ENCODE measurements at regions of chr1 and their contacts with region 1.

Region 1: GRCh38 chr1:63691701-63692425 is 82.0 kb upstream of the ROR1 start:
- DNase-seq: peak; percentile 65
- H3K4me3 Mint-ChIP-seq: no peak overlapping the region
- H3K27ac Mint-ChIP-seq: no peak overlapping the region
- H3K4me1 Mint-ChIP-seq: peaks cover 5% of the 10 kb centered on the region
- H3K27me3 Mint-ChIP-seq: no peaks in the 10 kb centered on the region

Region 2: DNA sequence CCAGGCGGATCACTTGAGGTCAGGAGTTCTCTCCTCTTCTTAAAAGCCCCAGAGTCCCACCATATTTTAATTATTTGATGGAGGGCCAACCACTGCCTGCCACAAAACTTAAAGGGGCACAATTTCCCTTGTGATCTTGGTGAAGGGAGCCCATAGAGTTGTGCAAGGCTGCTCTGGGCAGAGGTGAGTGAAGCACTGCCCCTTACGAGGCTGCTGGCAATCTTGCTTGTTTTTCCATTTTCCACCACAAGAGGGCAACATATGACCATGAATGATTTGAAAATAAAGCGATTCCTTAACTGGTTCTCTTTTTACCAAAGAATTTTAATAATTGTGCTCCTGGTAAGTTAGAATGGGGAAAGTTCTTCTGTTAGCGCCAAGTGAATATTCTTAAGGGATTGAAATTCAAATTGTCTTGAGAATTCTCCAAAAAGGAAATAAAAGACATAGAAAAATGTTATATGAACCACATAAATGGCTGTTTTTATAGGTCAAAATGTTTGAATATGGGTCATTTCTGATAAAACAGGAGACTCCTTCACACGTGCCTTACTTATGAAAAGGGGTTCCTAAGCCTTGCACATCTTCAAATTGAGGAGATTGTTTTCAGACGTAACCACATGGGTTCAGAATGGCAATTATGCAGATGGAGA is 76.0 kb before region 1 on chr1:
- CTCF ChIA-PET with region 1: interaction called, 5 read pairs
- intact Hi-C with region 1: loop called (anchors 1 kb)
- DNase-seq: peak; percentile 58
- H3K4me3 Mint-ChIP-seq: no peak overlapping the region
- H3K27ac Mint-ChIP-seq: no peak overlapping the region
- H3K4me1 Mint-ChIP-seq: peaks cover 4% of the 10 kb centered on the region
- H3K27me3 Mint-ChIP-seq: no peaks in the 10 kb centered on the region

Region 3: DNA sequence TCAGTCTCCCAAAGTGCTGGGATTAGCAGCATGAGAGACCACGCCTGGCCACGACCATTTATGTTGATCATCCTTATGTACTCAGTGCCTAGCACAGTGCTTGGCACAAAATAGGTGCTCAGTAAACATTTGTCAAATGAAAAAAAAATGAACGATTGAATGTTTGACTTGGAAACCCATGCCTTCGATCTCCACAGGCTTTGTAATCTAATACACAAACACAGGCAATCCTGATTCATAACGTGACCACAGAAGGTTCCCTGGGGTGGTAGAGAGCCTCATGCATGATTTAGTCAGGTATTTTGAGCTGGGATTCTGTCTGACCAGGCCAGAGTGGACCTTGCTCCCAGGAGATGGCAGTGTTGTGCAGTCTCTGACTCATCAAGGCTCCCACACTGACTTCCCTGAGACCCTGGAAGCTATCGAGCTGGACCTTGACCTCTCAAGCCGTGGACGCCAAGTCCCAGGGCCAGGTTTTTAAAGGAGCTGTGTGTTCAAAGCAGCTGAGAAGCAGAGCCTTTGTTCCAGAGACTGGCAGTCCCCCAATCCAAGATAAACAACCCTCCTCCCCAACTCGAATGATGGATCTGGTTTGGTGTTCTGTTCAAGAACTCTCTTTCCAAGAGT is 17.5 kb before region 1 on chr1:
- CTCF ChIA-PET with region 1: no interaction called
- intact Hi-C with region 1: no loop called
- DNase-seq: peak; percentile 23
- H3K4me3 Mint-ChIP-seq: no peak overlapping the region
- H3K27ac Mint-ChIP-seq: no peak overlapping the region
- H3K4me1 Mint-ChIP-seq: no peaks in the 10 kb centered on the region
- H3K27me3 Mint-ChIP-seq: no peaks in the 10 kb centered on the region

Region 4: GRCh38 chr1:63746129-63746864 is 54.4 kb after region 1 on chr1:
- CTCF ChIA-PET with region 1: interaction called, 3 read pairs
- intact Hi-C with region 1: loop called (anchors 1 kb)
- DNase-seq: peak; percentile 82
- H3K4me3 Mint-ChIP-seq: no peak overlapping the region
- H3K27ac Mint-ChIP-seq: peak overlapping the region; percentile 78
- H3K4me1 Mint-ChIP-seq: peaks cover 21% of the 10 kb centered on the region
- H3K27me3 Mint-ChIP-seq: peaks cover 11% of the 10 kb centered on the region

Region 5: GRCh38 chr1:63773815-63774616 is 82.2 kb after region 1 on chr1 and contains the start of gene ROR1:
- CTCF ChIA-PET with region 1: interaction called, 6 read pairs
- intact Hi-C with region 1: loop called (anchors 5 kb)
- DNase-seq: peak; percentile 87
- H3K4me3 Mint-ChIP-seq: peak within 1 kb of the TSS; percentile 76
- H3K27ac Mint-ChIP-seq: no peak within 1 kb of the TSS
- H3K4me1 Mint-ChIP-seq: peaks cover 17% of the 10 kb centered on the region
- H3K27me3 Mint-ChIP-seq: peaks cover 52% of the 10 kb centered on the region
- total RNA-seq, gene ROR1: 0.10 to 0.14 TPM

Region 6: GRCh38 chr1:63917571-63918417 is 225.9 kb after region 1 on chr1:
- CTCF ChIA-PET with region 1: interaction called, 6 read pairs
- intact Hi-C with region 1: loop called (anchors 1 kb)
- DNase-seq: peak; percentile 42
- H3K4me3 Mint-ChIP-seq: no peak overlapping the region
- H3K27ac Mint-ChIP-seq: no peak overlapping the region
- H3K4me1 Mint-ChIP-seq: no peaks in the 10 kb centered on the region
- H3K27me3 Mint-ChIP-seq: no peaks in the 10 kb centered on the region

Measured in activated naive CD4-positive, alpha-beta T cell treated with anti-CD3 and anti-CD28 coated beads for 36 hours (primary cell).